ENCODE measurements at regions of chr1 and their contacts with region 1.

Region 1: DNA sequence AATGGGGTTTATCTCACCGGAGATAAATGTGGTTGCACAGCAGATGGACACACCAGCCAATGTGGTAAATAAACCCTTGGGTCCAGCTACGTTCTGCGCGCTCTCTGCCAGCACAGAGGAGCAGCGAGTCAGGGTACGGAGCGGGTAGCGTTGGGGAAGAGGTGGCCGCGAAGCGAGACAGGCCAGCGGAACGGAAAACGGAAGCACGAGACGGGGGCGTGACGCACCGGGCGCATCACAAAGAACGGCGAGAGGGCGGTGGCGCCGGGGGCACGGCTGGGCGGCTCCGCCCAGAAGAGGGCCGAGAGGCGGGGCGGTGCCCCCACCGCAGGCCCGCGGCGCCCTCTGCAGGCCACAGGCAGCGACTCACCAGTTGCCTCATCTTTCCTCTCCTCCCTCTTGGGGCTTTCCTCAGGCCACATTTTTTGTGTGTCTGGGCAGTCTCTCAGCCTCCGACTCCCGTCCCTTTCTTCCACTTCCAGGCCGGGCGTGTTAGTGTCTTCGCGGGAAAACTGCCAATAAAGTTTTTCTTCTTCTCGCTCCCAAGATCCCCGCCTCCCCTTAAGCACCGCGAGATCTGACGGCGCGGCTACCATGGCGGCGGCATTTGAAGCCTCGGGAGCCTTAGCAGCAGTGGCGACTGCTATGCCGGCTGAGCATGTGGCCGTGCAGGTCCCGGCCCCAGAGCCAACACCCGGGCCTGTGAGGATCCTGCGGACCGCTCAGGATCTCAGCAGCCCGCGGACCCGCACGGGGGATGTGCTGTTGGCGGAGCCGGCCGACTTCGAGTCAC is at the start of gene DDX20:
- DNase-seq: peak; percentile 94
- ATAC-seq: peak; percentile 89
- H3K4me3 Mint-ChIP-seq: peak within 1 kb of the TSS; percentile 97
- H3K27ac Mint-ChIP-seq: peak within 1 kb of the TSS; percentile 96
- H3K4me1 Mint-ChIP-seq: peaks cover 30% of the 10 kb centered on the region
- H3K27me3 Mint-ChIP-seq: no peaks in the 10 kb centered on the region
- CTCF ChIP-seq: peak; percentile 55
- total RNA-seq, gene DDX20: 21.5 and 22.4 TPM in 2 replicates

Region 2: GRCh38 chr1:111203681-111204200 is 551.8 kb before region 1 on chr1:
- CTCF ChIA-PET with region 1: no interaction called
- POLR2A ChIA-PET with region 1: no interaction called
- intact Hi-C with region 1: loop called (anchors 5 kb)
- DNase-seq: peak; percentile 80
- ATAC-seq: peak; percentile 59
- H3K4me3 Mint-ChIP-seq: peak overlapping the region; percentile 89
- H3K27ac Mint-ChIP-seq: peak overlapping the region; percentile 93
- H3K4me1 Mint-ChIP-seq: peaks cover 85% of the 10 kb centered on the region
- H3K27me3 Mint-ChIP-seq: no peaks in the 10 kb centered on the region
- CTCF ChIP-seq: no peak

Region 3: GRCh38 chr1:111619635-111620440 is 135.7 kb before region 1 on chr1 and contains the start of gene RAP1A:
- CTCF ChIA-PET with region 1: no interaction called
- POLR2A ChIA-PET with region 1: interaction called, 9 read pairs
- intact Hi-C with region 1: loop called (anchors 2 kb)
- DNase-seq: peak; percentile 88
- ATAC-seq: peak; percentile 77
- H3K4me3 Mint-ChIP-seq: peak within 1 kb of the TSS; percentile 95
- H3K27ac Mint-ChIP-seq: peak within 1 kb of the TSS; percentile 93
- H3K4me1 Mint-ChIP-seq: peaks cover 82% of the 10 kb centered on the region
- H3K27me3 Mint-ChIP-seq: no peaks in the 10 kb centered on the region
- CTCF ChIP-seq: no peak
- total RNA-seq, gene RAP1A: 92.4 and 93.8 TPM in 2 replicates

Region 4: GRCh38 chr1:111656086-111657017 is 99.2 kb before region 1 on chr1:
- CTCF ChIA-PET with region 1: no interaction called
- POLR2A ChIA-PET with region 1: no interaction called
- intact Hi-C with region 1: no loop called
- DNase-seq: no peak
- ATAC-seq: no peak
- H3K4me3 Mint-ChIP-seq: no peak overlapping the region
- H3K27ac Mint-ChIP-seq: no peak overlapping the region
- H3K4me1 Mint-ChIP-seq: peaks cover 35% of the 10 kb centered on the region
- H3K27me3 Mint-ChIP-seq: no peaks in the 10 kb centered on the region
- CTCF ChIP-seq: peak; percentile 52

Region 5: GRCh38 chr1:111739194-111739924 is 16.2 kb before region 1 on chr1 and contains the start of gene INKA2:
- CTCF ChIA-PET with region 1: interaction called, 4 read pairs
- POLR2A ChIA-PET with region 1: interaction called, 30 read pairs
- intact Hi-C with region 1: loop called (anchors 1 kb)
- DNase-seq: peak; percentile 74
- ATAC-seq: peak; percentile 77
- H3K4me3 Mint-ChIP-seq: peak within 1 kb of the TSS; percentile 92
- H3K27ac Mint-ChIP-seq: peak within 1 kb of the TSS; percentile 84
- H3K4me1 Mint-ChIP-seq: peaks cover 18% of the 10 kb centered on the region
- H3K27me3 Mint-ChIP-seq: peaks cover 2% of the 10 kb centered on the region
- CTCF ChIP-seq: no peak
- total RNA-seq, gene INKA2: 1.3 and 2.1 TPM in 2 replicates

Region 6: DNA sequence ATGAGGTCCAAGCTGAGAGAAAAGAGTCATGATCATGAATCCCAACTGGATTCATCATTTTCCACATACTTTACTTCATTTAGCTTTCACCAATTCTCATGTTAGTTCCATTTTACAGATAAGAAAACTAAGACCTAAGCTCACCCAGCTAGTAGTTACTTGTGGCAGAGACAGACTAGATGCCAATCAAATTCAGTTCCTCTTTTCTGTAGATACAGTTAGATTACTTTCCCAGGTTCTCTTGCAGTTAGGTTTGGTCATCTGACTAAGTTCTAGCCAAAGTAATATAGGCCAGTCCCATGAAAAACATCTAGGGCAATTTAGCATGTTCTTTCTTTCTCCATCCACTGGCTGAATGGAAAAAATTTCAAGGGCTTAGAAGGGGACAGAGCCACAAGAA is 242.8 kb after region 1 on chr1:
- CTCF ChIA-PET with region 1: no interaction called
- POLR2A ChIA-PET with region 1: no interaction called
- intact Hi-C with region 1: no loop called
- DNase-seq: no peak
- ATAC-seq: no peak
- H3K4me3 Mint-ChIP-seq: no peak overlapping the region
- H3K27ac Mint-ChIP-seq: no peak overlapping the region
- H3K4me1 Mint-ChIP-seq: no peaks in the 10 kb centered on the region
- H3K27me3 Mint-ChIP-seq: peaks cover 37% of the 10 kb centered on the region
- CTCF ChIP-seq: no peak

Measured in activated B cell treated with CpG ODN at 0.5 μM for 24 hours (primary cell).